CD8-positive, alpha-beta T cell (primary cell): ENCODE measurements at regions of chr4 and their contacts with region 1.

Region 1: GRCh38 chr4:38856524-38857337 is at the start of gene TLR6:
- DNase-seq: peak; percentile 35 to 86 (median 64)
- ATAC-seq: peak; percentile 85
- H3K4me3 ChIP-seq: peak within 1 kb of the TSS; percentile 31 to 57
- H3K4me3 Mint-ChIP-seq: peak within 1 kb of the TSS; percentile 74
- H3K27ac ChIP-seq: peak within 1 kb of the TSS; percentile 32 to 50
- H3K27ac Mint-ChIP-seq: peak within 1 kb of the TSS; percentile 62
- H3K4me1 ChIP-seq: peaks cover 17% of the 10 kb centered on the region
- H3K4me1 Mint-ChIP-seq: peaks cover 38% of the 10 kb centered on the region
- H3K27me3 ChIP-seq: no peaks in the 10 kb centered on the region
- H3K27me3 Mint-ChIP-seq: no peaks in the 10 kb centered on the region
- CTCF ChIP-seq: peak; percentile 93
- total RNA-seq, gene TLR6: 0.31 to 0.60 TPM

Region 2: GRCh38 chr4:37661772-37662171 is 1195.0 kb before region 1 on chr4:
- CTCF ChIA-PET with region 1: no interaction called
- POLR2A ChIA-PET with region 1: no interaction called
- intact Hi-C with region 1: no loop called
- DNase-seq: no peak
- ATAC-seq: no peak
- H3K4me3 ChIP-seq: no peak overlapping the region
- H3K4me3 Mint-ChIP-seq: no peak overlapping the region
- H3K27ac ChIP-seq: no peak overlapping the region
- H3K27ac Mint-ChIP-seq: no peak overlapping the region
- H3K4me1 ChIP-seq: peaks cover 21% of the 10 kb centered on the region
- H3K4me1 Mint-ChIP-seq: peaks cover 68% of the 10 kb centered on the region
- H3K27me3 ChIP-seq: no peaks in the 10 kb centered on the region
- H3K27me3 Mint-ChIP-seq: no peaks in the 10 kb centered on the region
- CTCF ChIP-seq: no peak

Region 3: GRCh38 chr4:38062088-38062893 is 794.4 kb before region 1 on chr4:
- CTCF ChIA-PET with region 1: interaction called, 6 read pairs
- POLR2A ChIA-PET with region 1: no interaction called
- intact Hi-C with region 1: loop called (anchors 2 to 5 kb)
- DNase-seq: peak; percentile 24 to 80 (median 67)
- ATAC-seq: peak; percentile 59
- H3K4me3 ChIP-seq: peak overlapping the region in 1 of 2 experiments; percentile 13
- H3K4me3 Mint-ChIP-seq: peak overlapping the region; percentile 83
- H3K27ac ChIP-seq: no peak overlapping the region
- H3K27ac Mint-ChIP-seq: peak overlapping the region; percentile 11
- H3K4me1 ChIP-seq: no peaks in the 10 kb centered on the region
- H3K4me1 Mint-ChIP-seq: peaks cover 12% of the 10 kb centered on the region
- H3K27me3 ChIP-seq: no peaks in the 10 kb centered on the region
- H3K27me3 Mint-ChIP-seq: no peaks in the 10 kb centered on the region
- CTCF ChIP-seq: peak; percentile 97

Region 4: DNA sequence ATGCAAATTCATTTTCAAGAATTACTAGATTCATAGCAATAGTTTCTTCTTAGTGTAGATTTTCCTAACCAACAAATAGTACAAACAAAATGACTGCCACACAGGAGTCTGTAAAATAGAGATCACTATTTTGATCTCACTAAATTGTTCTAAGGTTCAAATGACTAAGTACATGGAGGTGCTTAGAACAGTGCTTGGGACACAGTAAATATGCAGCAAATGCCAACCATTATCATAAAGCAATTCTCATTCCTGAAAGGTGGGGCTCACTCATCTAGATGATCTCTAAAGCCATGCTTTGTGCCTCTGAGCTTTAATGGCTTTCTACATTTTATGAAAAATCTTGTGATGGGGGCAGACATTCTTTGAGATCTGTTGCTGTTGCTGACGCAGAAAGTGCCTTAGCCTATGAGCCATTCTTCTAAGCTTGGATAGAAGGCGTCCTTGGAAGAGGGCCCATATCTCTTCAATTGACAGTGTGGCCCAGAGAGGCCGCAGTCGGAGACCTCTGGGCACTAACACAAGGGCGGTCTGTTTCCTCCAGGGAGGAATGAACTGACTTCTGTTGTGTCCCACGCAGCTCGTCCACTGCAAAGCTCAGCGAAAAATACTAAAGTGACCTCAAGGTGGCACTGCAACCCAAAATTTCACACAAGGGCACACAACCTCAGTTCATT is 97.5 kb before region 1 on chr4:
- CTCF ChIA-PET with region 1: interaction called, 57 read pairs
- POLR2A ChIA-PET with region 1: no interaction called
- intact Hi-C with region 1: loop called (anchors 1 kb)
- DNase-seq: peak; percentile 38 to 79 (median 52)
- ATAC-seq: peak; percentile 72
- H3K4me3 ChIP-seq: no peak overlapping the region
- H3K4me3 Mint-ChIP-seq: no peak overlapping the region
- H3K27ac ChIP-seq: no peak overlapping the region
- H3K27ac Mint-ChIP-seq: no peak overlapping the region
- H3K4me1 ChIP-seq: no peaks in the 10 kb centered on the region
- H3K4me1 Mint-ChIP-seq: peaks cover 19% of the 10 kb centered on the region
- H3K27me3 ChIP-seq: no peaks in the 10 kb centered on the region
- H3K27me3 Mint-ChIP-seq: no peaks in the 10 kb centered on the region
- CTCF ChIP-seq: peak; percentile 90

Region 5: GRCh38 chr4:38782452-38783108 is 74.2 kb before region 1 on chr4 and contains the start of gene TLR10:
- CTCF ChIA-PET with region 1: interaction called, 13 read pairs
- POLR2A ChIA-PET with region 1: interaction called, 3 read pairs
- intact Hi-C with region 1: loop called in 1 of 2 experiments (anchors 1 kb)
- DNase-seq: peak in 6 of 9 experiments; percentile 35 to 71 (median 48)
- ATAC-seq: peak; percentile 82
- H3K4me3 ChIP-seq: no peak within 1 kb of the TSS
- H3K4me3 Mint-ChIP-seq: peak within 1 kb of the TSS; percentile 13
- H3K27ac ChIP-seq: no peak within 1 kb of the TSS
- H3K27ac Mint-ChIP-seq: no peak within 1 kb of the TSS
- H3K4me1 ChIP-seq: no peaks in the 10 kb centered on the region
- H3K4me1 Mint-ChIP-seq: peaks cover 4% of the 10 kb centered on the region
- H3K27me3 ChIP-seq: no peaks in the 10 kb centered on the region
- H3K27me3 Mint-ChIP-seq: no peaks in the 10 kb centered on the region
- CTCF ChIP-seq: peak; percentile 86
- total RNA-seq, gene TLR10: 0.22 to 0.28 TPM

Region 6: GRCh38 chr4:38804654-38805295 is 52.0 kb before region 1 on chr4 and contains the start of gene TLR1:
- CTCF ChIA-PET with region 1: interaction called, 8 read pairs
- POLR2A ChIA-PET with region 1: no interaction called
- intact Hi-C with region 1: loop called (anchors 2 to 5 kb)
- DNase-seq: peak in 2 of 9 experiments; percentile 67 to 78
- ATAC-seq: peak; percentile 89
- H3K4me3 ChIP-seq: peak within 1 kb of the TSS; percentile 44 to 49
- H3K4me3 Mint-ChIP-seq: peak within 1 kb of the TSS; percentile 84
- H3K27ac ChIP-seq: peak within 1 kb of the TSS; percentile 48 to 63
- H3K27ac Mint-ChIP-seq: peak within 1 kb of the TSS; percentile 88
- H3K4me1 ChIP-seq: peaks cover 30% of the 10 kb centered on the region
- H3K4me1 Mint-ChIP-seq: peaks cover 38% of the 10 kb centered on the region
- H3K27me3 ChIP-seq: no peaks in the 10 kb centered on the region
- H3K27me3 Mint-ChIP-seq: no peaks in the 10 kb centered on the region
- CTCF ChIP-seq: peak; percentile 71
- total RNA-seq, gene TLR1: 10.1 to 13.4 TPM

Region 7: DNA sequence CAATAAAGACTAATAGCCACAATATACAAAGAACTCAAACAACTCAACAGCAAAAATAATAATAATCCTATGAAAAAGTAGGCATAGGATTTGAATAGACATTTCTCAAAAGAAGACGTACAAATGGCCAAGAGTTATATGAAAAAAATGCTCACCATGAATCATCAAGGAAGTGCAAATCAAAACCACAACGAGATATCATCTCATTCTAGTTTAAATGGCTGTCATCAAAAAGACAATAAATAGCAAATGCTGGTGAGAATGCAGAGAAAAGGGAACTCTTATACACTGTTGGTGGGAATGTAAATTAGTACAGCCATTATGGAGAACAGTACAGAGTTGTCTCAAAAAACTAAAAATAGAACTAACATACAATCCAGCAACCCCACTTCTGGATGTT is 18.9 kb before region 1 on chr4:
- CTCF ChIA-PET with region 1: interaction called, 5 read pairs
- POLR2A ChIA-PET with region 1: no interaction called
- intact Hi-C with region 1: loop called in 1 of 2 experiments (anchors 1 kb)
- DNase-seq: peak in 2 of 9 experiments; percentile 40 to 52
- ATAC-seq: peak; percentile 83
- H3K4me3 ChIP-seq: no peak overlapping the region
- H3K4me3 Mint-ChIP-seq: peak overlapping the region; percentile 3
- H3K27ac ChIP-seq: no peak overlapping the region
- H3K27ac Mint-ChIP-seq: peak overlapping the region; percentile 12
- H3K4me1 ChIP-seq: peaks cover 15% of the 10 kb centered on the region
- H3K4me1 Mint-ChIP-seq: peaks cover 16% of the 10 kb centered on the region
- H3K27me3 ChIP-seq: no peaks in the 10 kb centered on the region
- H3K27me3 Mint-ChIP-seq: no peaks in the 10 kb centered on the region
- CTCF ChIP-seq: no peak

Region 8: GRCh38 chr4:39044364-39044955 is 187.7 kb after region 1 on chr4:
- CTCF ChIA-PET with region 1: no interaction called
- POLR2A ChIA-PET with region 1: no interaction called
- intact Hi-C with region 1: loop called in 1 of 2 experiments (anchors 5 kb)
- DNase-seq: peak; percentile 85 to 99 (median 93)
- ATAC-seq: peak; percentile 83
- H3K4me3 ChIP-seq: peak overlapping the region; percentile 60 to 66
- H3K4me3 Mint-ChIP-seq: peak overlapping the region; percentile 92
- H3K27ac ChIP-seq: peak overlapping the region; percentile 59 to 89
- H3K27ac Mint-ChIP-seq: peak overlapping the region; percentile 96
- H3K4me1 ChIP-seq: peaks cover 21% of the 10 kb centered on the region
- H3K4me1 Mint-ChIP-seq: peaks cover 53% of the 10 kb centered on the region
- H3K27me3 ChIP-seq: no peaks in the 10 kb centered on the region
- H3K27me3 Mint-ChIP-seq: no peaks in the 10 kb centered on the region
- CTCF ChIP-seq: no peak